ENCODE measurements at regions of chr5 and their contacts with region 1.

Region 1: DNA sequence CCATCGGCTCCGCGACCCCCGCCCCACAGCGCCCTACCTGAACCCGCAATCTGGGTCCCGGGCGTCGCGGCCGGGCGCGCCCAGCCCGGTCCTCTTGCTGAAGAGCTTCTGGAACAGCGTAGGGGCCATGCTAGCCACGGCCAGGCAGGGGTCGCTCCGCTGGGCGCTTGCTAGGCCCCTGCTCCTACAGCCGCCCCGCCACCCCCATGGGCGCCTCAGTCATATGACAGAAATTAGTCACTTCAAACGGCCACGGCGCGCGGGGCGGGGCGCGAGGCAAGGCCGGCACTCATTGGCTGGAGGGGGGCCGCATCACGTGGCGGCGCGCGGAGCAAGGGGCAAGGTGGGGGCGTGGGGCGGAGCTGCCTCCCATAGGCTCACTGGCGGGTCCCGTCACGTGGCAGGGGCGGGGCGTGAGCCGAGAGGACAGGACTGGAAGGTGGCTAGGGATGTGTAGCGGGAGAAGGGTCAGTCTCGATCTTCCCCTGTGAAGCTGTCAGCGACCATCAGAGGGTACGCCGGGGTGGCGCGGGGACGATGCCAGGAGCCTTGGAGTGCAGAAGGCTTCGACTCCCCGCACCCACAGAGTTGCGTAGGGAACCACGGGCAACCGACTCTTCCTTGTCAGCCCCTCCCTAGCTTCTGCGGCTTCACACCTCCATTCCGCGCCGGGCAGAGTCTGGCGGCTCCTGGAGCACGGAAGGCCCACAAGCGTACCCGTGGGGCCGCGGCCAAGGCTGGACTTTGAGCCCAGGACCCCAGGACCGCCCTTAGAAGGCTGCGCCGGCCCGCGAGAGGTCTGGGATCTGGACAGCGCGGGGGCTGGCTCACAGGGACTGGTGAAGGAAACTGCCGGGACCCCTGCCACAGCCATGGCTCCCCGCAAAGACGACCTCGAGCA is at the start of gene FNIP1:
- DNase-seq: peak; percentile 90
- ATAC-seq: peak; percentile 94
- H3K4me3 ChIP-seq: peak within 1 kb of the TSS; percentile 98
- H3K27ac ChIP-seq: peak within 1 kb of the TSS; percentile 74
- H3K4me1 ChIP-seq: peaks cover 10% of the 10 kb centered on the region
- H3K27me3 ChIP-seq: no peaks in the 10 kb centered on the region
- CTCF ChIP-seq: no peak
- total RNA-seq, gene FNIP1: 15.1 and 16.3 TPM in 2 replicates

Region 2: GRCh38 chr5:131589510-131590348 is 207.3 kb before region 1 on chr5:
- CTCF ChIA-PET with region 1: no interaction called
- POLR2A ChIA-PET with region 1: no interaction called
- intact Hi-C with region 1: loop called (anchors 5 kb)
- DNase-seq: peak; percentile 41
- ATAC-seq: peak; percentile 51
- H3K4me3 ChIP-seq: no peak overlapping the region
- H3K27ac ChIP-seq: no peak overlapping the region
- H3K4me1 ChIP-seq: peaks cover 8% of the 10 kb centered on the region
- H3K27me3 ChIP-seq: no peaks in the 10 kb centered on the region
- CTCF ChIP-seq: peak; percentile 78

Region 3: GRCh38 chr5:131634996-131635754 is 161.9 kb before region 1 on chr5 and contains the start of gene RAPGEF6:
- CTCF ChIA-PET with region 1: no interaction called
- POLR2A ChIA-PET with region 1: interaction called, 3 read pairs
- intact Hi-C with region 1: loop called (anchors 2 kb)
- DNase-seq: peak; percentile 97
- ATAC-seq: peak; percentile 81
- H3K4me3 ChIP-seq: peak within 1 kb of the TSS; percentile 77
- H3K27ac ChIP-seq: peak within 1 kb of the TSS; percentile 99
- H3K4me1 ChIP-seq: peaks cover 31% of the 10 kb centered on the region
- H3K27me3 ChIP-seq: no peaks in the 10 kb centered on the region
- CTCF ChIP-seq: no peak
- total RNA-seq, gene RAPGEF6: 9.7 and 9.8 TPM in 2 replicates

Region 4: GRCh38 chr5:131679913-131680312 is 117.1 kb before region 1 on chr5:
- CTCF ChIA-PET with region 1: interaction called, 4 read pairs
- POLR2A ChIA-PET with region 1: no interaction called
- intact Hi-C with region 1: loop called (anchors 10 kb)
- DNase-seq: no peak
- ATAC-seq: no peak
- H3K4me3 ChIP-seq: no peak overlapping the region
- H3K27ac ChIP-seq: no peak overlapping the region
- H3K4me1 ChIP-seq: no peaks in the 10 kb centered on the region
- H3K27me3 ChIP-seq: no peaks in the 10 kb centered on the region
- CTCF ChIP-seq: no peak

Region 5: GRCh38 chr5:131747180-131748105 is 49.6 kb before region 1 on chr5:
- CTCF ChIA-PET with region 1: no interaction called
- POLR2A ChIA-PET with region 1: no interaction called
- intact Hi-C with region 1: loop called (anchors 2 kb)
- DNase-seq: peak; percentile 13
- ATAC-seq: peak; percentile 44
- H3K4me3 ChIP-seq: no peak overlapping the region
- H3K27ac ChIP-seq: no peak overlapping the region
- H3K4me1 ChIP-seq: peaks cover 13% of the 10 kb centered on the region
- H3K27me3 ChIP-seq: no peaks in the 10 kb centered on the region
- CTCF ChIP-seq: no peak

Region 6: GRCh38 chr5:131776450-131776849 is 20.6 kb before region 1 on chr5:
- CTCF ChIA-PET with region 1: no interaction called
- POLR2A ChIA-PET with region 1: no interaction called
- intact Hi-C with region 1: no loop called
- DNase-seq: no peak
- ATAC-seq: no peak
- H3K4me3 ChIP-seq: no peak overlapping the region
- H3K27ac ChIP-seq: no peak overlapping the region
- H3K4me1 ChIP-seq: peaks cover 21% of the 10 kb centered on the region
- H3K27me3 ChIP-seq: no peaks in the 10 kb centered on the region
- CTCF ChIP-seq: no peak

Region 7: DNA sequence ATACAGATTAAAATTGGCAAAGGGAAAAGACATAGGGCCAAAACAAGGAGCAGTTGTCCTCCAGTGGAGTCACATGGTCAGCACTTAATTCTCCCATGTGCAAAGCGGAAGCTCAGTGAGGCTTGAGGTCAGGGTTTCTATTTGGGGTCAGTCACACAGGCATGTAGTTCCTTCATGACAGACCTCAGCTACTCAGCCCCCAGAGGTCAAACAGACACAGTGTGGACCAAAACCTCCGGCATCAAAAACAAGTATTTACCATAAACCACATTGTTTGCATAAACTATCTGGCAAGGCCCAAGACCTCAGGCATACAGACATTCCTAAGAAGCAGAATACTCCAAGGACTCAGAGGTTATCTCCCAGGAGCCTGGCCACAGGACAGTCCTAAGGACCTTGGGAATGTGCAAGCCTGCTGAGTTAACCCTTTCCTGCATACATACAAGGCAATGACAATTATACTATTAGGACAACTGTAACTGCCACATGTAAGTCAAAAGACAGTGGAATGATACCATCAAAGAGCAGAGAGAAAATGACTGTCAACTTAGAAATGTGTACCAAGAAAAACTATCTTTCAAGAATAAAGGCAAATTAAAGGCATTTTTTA is 28.5 kb after region 1 on chr5:
- CTCF ChIA-PET with region 1: no interaction called
- POLR2A ChIA-PET with region 1: no interaction called
- intact Hi-C with region 1: no loop called
- DNase-seq: no peak
- ATAC-seq: no peak
- H3K4me3 ChIP-seq: no peak overlapping the region
- H3K27ac ChIP-seq: no peak overlapping the region
- H3K4me1 ChIP-seq: no peaks in the 10 kb centered on the region
- H3K27me3 ChIP-seq: no peaks in the 10 kb centered on the region
- CTCF ChIP-seq: no peak

Region 8: GRCh38 chr5:131857388-131857787 is 60.3 kb after region 1 on chr5:
- CTCF ChIA-PET with region 1: no interaction called
- POLR2A ChIA-PET with region 1: no interaction called
- intact Hi-C with region 1: no loop called
- DNase-seq: no peak
- ATAC-seq: no peak
- H3K4me3 ChIP-seq: no peak overlapping the region
- H3K27ac ChIP-seq: no peak overlapping the region
- H3K4me1 ChIP-seq: no peaks in the 10 kb centered on the region
- H3K27me3 ChIP-seq: no peaks in the 10 kb centered on the region
- CTCF ChIP-seq: no peak

Region 9: GRCh38 chr5:132227485-132228240 is 430.6 kb after region 1 on chr5 and contains the start of gene P4HA2:
- CTCF ChIA-PET with region 1: no interaction called
- POLR2A ChIA-PET with region 1: no interaction called
- intact Hi-C with region 1: no loop called
- DNase-seq: peak; percentile 79
- ATAC-seq: peak; percentile 92
- H3K4me3 ChIP-seq: peak within 1 kb of the TSS; percentile 69
- H3K27ac ChIP-seq: peak within 1 kb of the TSS; percentile 30
- H3K4me1 ChIP-seq: peaks cover 20% of the 10 kb centered on the region
- H3K27me3 ChIP-seq: no peaks in the 10 kb centered on the region
- CTCF ChIP-seq: 0 out of 2 replicates have a peak, but pooled peaks have one; percentile 16
- total RNA-seq, gene P4HA2: 38.7 and 43.6 TPM in 2 replicates